Caco-2 (cell line): ENCODE measurements at regions of chr17 and their contacts with region 1.

Region 1: GRCh38 chr17:50681263-50682210 is 26.2 kb downstream of the ANKRD40 start:
- DNase-seq: peak; percentile 88 to 89
- H3K4me3 ChIP-seq: no peak overlapping the region
- H3K4me3 Mint-ChIP-seq: peak overlapping the region; percentile 14
- H3K27ac Mint-ChIP-seq: peak overlapping the region; percentile 66
- H3K4me1 ChIP-seq: peaks cover 73% of the 10 kb centered on the region
- H3K4me1 Mint-ChIP-seq: peaks cover 58% of the 10 kb centered on the region
- H3K27me3 ChIP-seq: no peaks in the 10 kb centered on the region
- H3K27me3 Mint-ChIP-seq: no peaks in the 10 kb centered on the region
- CTCF ChIP-seq: peak; percentile 94

Region 2: GRCh38 chr17:50501054-50501453 is 180.5 kb before region 1 on chr17:
- CTCF ChIA-PET with region 1: no interaction called
- POLR2A ChIA-PET with region 1: no interaction called
- intact Hi-C with region 1: no loop called
- DNase-seq: peak in 1 of 2 experiments; percentile 71
- H3K4me3 ChIP-seq: no peak overlapping the region
- H3K4me3 Mint-ChIP-seq: no peak overlapping the region
- H3K27ac Mint-ChIP-seq: no peak overlapping the region
- H3K4me1 ChIP-seq: peaks cover 19% of the 10 kb centered on the region
- H3K4me1 Mint-ChIP-seq: peaks cover 15% of the 10 kb centered on the region
- H3K27me3 ChIP-seq: no peaks in the 10 kb centered on the region
- H3K27me3 Mint-ChIP-seq: no peaks in the 10 kb centered on the region
- CTCF ChIP-seq: peak; percentile 75 to 81

Region 3: GRCh38 chr17:50668025-50668837 is 13.3 kb before region 1 on chr17:
- CTCF ChIA-PET with region 1: interaction called, 6 read pairs
- POLR2A ChIA-PET with region 1: interaction called, 6 read pairs
- intact Hi-C with region 1: loop called (anchors 1 kb)
- DNase-seq: peak in 1 of 2 experiments; percentile 49
- H3K4me3 ChIP-seq: no peak overlapping the region
- H3K4me3 Mint-ChIP-seq: no peak overlapping the region
- H3K27ac Mint-ChIP-seq: peak overlapping the region; percentile 3
- H3K4me1 ChIP-seq: peaks cover 32% of the 10 kb centered on the region
- H3K4me1 Mint-ChIP-seq: peaks cover 44% of the 10 kb centered on the region
- H3K27me3 ChIP-seq: no peaks in the 10 kb centered on the region
- H3K27me3 Mint-ChIP-seq: no peaks in the 10 kb centered on the region
- CTCF ChIP-seq: no peak

Region 4: GRCh38 chr17:50841949-50842354 is 160.4 kb after region 1 on chr17:
- CTCF ChIA-PET with region 1: no interaction called
- POLR2A ChIA-PET with region 1: no interaction called
- intact Hi-C with region 1: no loop called
- DNase-seq: peak; percentile 89 to 94
- H3K4me3 ChIP-seq: no peak overlapping the region
- H3K4me3 Mint-ChIP-seq: no peak overlapping the region
- H3K27ac Mint-ChIP-seq: no peak overlapping the region
- H3K4me1 ChIP-seq: peaks cover 23% of the 10 kb centered on the region
- H3K4me1 Mint-ChIP-seq: peaks cover 10% of the 10 kb centered on the region
- H3K27me3 ChIP-seq: no peaks in the 10 kb centered on the region
- H3K27me3 Mint-ChIP-seq: no peaks in the 10 kb centered on the region
- CTCF ChIP-seq: peak; percentile 98 to 99